ENCODE measurements at regions of chr16 and their contacts with region 1.

Region 1: GRCh38 chr16:71961066-71962039 is 38.8 kb downstream of the PKD1L3 start:
- DNase-seq: peak; percentile 89
- ATAC-seq: peak; percentile 95
- H3K4me3 Mint-ChIP-seq: no peak overlapping the region
- H3K27ac Mint-ChIP-seq: no peak overlapping the region
- H3K4me1 Mint-ChIP-seq: peaks cover 13% of the 10 kb centered on the region
- H3K27me3 Mint-ChIP-seq: no peaks in the 10 kb centered on the region

Region 2: DNA sequence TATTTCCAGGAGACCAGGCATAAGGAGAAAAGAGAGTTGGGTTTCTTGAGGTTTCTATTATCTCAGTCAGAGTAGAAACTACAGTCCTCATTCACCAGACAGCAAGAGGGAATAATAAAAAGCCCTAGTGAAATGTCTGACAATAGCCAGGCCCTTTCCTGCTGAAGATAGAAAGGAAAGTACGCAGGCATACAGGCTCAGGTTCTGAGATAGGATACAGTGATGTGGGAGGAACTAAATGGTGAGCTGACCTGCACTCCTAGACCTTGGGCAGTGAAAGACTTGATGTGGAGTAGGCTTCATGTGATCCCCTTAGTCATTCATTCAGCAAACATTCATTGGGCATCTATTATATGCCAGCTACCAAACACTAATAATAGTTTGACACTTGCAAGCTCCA is 92.3 kb before region 1 on chr16:
- CTCF ChIA-PET with region 1: interaction called, 13 read pairs
- POLR2A ChIA-PET with region 1: no interaction called
- DNase-seq: no peak
- ATAC-seq: no peak
- H3K4me3 Mint-ChIP-seq: no peak overlapping the region
- H3K27ac Mint-ChIP-seq: no peak overlapping the region
- H3K4me1 Mint-ChIP-seq: peaks cover 13% of the 10 kb centered on the region
- H3K27me3 Mint-ChIP-seq: no peaks in the 10 kb centered on the region

Region 3: GRCh38 chr16:71894921-71895678 is 66.3 kb before region 1 on chr16 and contains the start of gene IST1:
- CTCF ChIA-PET with region 1: interaction called, 16 read pairs
- POLR2A ChIA-PET with region 1: interaction called, 4 read pairs
- DNase-seq: peak; percentile 99
- ATAC-seq: peak; percentile 95
- H3K4me3 Mint-ChIP-seq: peak within 1 kb of the TSS; percentile 97
- H3K27ac Mint-ChIP-seq: peak within 1 kb of the TSS; percentile 97
- H3K4me1 Mint-ChIP-seq: peaks cover 24% of the 10 kb centered on the region
- H3K27me3 Mint-ChIP-seq: no peaks in the 10 kb centered on the region
- total RNA-seq, gene IST1: 155 to 174 TPM

Region 4: GRCh38 chr16:71917900-71918299 is 43.5 kb before region 1 on chr16:
- CTCF ChIA-PET with region 1: interaction called, 10 read pairs
- POLR2A ChIA-PET with region 1: no interaction called
- DNase-seq: no peak
- ATAC-seq: no peak
- H3K4me3 Mint-ChIP-seq: no peak overlapping the region
- H3K27ac Mint-ChIP-seq: no peak overlapping the region
- H3K4me1 Mint-ChIP-seq: peaks cover 23% of the 10 kb centered on the region
- H3K27me3 Mint-ChIP-seq: no peaks in the 10 kb centered on the region

Region 5: DNA sequence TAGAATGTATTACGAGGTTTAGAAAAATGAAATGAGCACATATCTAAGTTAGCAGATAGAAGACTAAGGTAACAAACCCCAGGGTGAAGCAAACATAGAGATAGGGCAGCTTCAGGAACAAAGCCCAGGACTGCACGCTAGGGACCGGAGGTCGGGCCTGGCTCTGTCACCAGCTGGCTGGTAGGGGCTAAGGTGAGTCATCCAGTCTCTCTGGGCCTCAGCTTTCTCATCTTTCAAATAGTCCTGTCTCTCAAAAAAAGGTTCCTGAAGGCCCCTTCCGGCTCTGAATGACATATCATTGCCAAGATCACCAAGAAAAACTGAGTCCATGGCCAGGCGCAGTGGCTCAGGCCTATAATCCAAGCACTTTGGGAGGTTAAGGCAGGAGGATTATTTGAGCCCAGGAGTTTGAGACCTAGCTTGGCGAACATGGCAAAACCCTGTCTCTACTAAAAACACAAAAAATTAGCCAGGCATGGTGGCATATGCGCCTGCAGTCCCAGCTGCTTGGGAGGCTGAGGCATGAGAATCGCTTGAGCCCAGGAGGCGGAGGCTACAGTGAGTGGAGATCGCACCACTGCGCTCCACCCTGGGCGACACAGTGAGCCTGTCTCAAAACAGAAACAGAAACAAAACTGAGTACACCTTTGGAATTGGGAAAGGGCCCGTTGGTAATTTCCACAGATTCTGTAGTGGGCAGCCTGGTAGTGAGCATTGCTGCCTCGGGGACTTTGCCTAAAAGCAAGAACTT is 12.9 kb after region 1 on chr16:
- CTCF ChIA-PET with region 1: interaction called, 28 read pairs
- POLR2A ChIA-PET with region 1: no interaction called
- DNase-seq: no peak
- ATAC-seq: no peak
- H3K4me3 Mint-ChIP-seq: no peak overlapping the region
- H3K27ac Mint-ChIP-seq: no peak overlapping the region
- H3K4me1 Mint-ChIP-seq: no peaks in the 10 kb centered on the region
- H3K27me3 Mint-ChIP-seq: peaks cover 2% of the 10 kb centered on the region

Region 6: DNA sequence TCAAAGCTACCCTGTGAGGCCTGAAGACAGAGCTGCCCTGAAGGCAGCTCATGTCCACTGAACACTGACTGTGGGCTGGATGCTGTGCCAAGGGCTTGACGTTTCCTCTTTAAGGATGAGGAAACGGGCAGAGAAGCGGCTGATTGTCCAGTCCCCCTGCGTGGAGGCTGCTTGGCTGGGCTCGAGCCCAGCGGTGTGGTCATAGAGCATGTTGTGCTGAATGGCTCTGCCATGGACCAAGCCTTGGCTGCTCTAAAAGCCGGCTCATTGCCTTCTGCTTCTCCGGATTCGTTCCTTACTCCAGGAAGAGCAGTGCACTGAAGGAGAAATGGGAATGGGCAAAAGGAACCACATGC is 64.4 kb after region 1 on chr16:
- CTCF ChIA-PET with region 1: no interaction called
- POLR2A ChIA-PET with region 1: no interaction called
- DNase-seq: no peak
- ATAC-seq: no peak
- H3K4me3 Mint-ChIP-seq: no peak overlapping the region
- H3K27ac Mint-ChIP-seq: no peak overlapping the region
- H3K4me1 Mint-ChIP-seq: no peaks in the 10 kb centered on the region
- H3K27me3 Mint-ChIP-seq: no peaks in the 10 kb centered on the region

Measured in activated CD8-positive, alpha-beta T cell treated with anti-CD3 and anti-CD28 coated beads, Interleukin-2, amount 10 ng/mL, durations not matched to agents 7 days and 5 days (primary cell).